ENCODE measurements at regions of chr22 and their contacts with region 1.

Region 1: GRCh38 chr22:36528795-36529751 is at the start of gene EIF3D:
- DNase-seq: peak; percentile 97
- ATAC-seq: peak; percentile 94
- H3K4me3 Mint-ChIP-seq: peak within 1 kb of the TSS; percentile 95
- H3K27ac Mint-ChIP-seq: peak within 1 kb of the TSS; percentile 99
- H3K4me1 Mint-ChIP-seq: peaks cover 9% of the 10 kb centered on the region
- H3K27me3 Mint-ChIP-seq: peaks cover 10% of the 10 kb centered on the region
- CTCF ChIP-seq: no peak
- total RNA-seq, gene EIF3D: 211 to 237 TPM (median 216 TPM) in 3 replicates

Region 2: DNA sequence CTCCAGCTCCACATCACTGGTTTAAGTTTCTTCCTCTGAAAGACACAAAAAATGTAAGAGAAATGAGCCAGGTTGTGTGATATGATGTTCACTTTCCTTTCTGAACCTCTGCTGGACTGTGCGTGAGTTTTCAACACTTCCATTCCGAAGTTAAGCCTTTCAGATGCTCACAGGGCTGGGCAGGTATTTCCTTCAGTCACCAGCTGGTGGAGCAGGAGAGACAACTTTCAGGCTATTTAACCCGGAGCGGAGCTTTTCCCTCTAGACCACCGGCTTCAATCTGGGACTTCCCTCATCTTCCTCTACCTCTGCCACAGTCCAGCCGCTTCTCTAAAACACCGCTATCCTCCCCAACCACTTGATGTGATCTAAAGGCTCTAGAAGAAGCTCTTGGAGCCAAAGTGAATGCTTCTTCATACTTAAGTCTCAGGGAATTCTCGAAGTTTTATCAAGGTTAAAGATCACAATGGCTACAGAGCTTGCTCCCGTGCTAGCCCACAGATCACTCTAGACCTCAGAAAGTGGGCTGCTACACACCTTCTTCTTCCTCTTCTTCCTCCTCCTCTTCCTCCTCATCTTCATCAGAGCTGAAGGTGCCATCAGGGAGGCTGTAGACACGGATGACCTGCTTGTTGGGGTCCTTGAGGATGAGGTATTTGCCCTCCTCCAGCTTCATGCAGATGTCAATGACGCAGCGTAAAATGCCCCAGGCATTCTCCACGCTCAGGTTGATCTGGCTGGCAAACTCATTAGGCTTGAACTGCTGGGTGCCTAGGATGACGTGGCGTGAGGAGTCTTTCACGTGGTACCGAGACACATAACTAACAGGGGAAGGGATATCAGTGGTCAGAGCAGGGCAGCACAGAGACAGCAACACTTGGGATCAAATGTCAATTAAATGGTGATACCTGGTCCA is 17.8 kb before region 1 on chr22:
- CTCF ChIA-PET with region 1: interaction called, 14 read pairs
- POLR2A ChIA-PET with region 1: interaction called, 5 read pairs
- DNase-seq: peak; percentile 66
- ATAC-seq: peak; percentile 61
- H3K4me3 Mint-ChIP-seq: no peak overlapping the region
- H3K27ac Mint-ChIP-seq: peak overlapping the region; percentile 36
- H3K4me1 Mint-ChIP-seq: 0 out of 2 replicates have a peak, but pooled peaks cover 4% of the 10 kb centered on the region
- H3K27me3 Mint-ChIP-seq: peaks cover 17% of the 10 kb centered on the region
- CTCF ChIP-seq: peak; percentile 40

Measured in WTC11 (cell line).